Posterior vena cava (tissue), 2 donors: ENCODE measurements at regions of chr14 and their contacts with region 1.

Region 1: GRCh38 chr14:28083389-28083788 is 683.2 kb upstream of the FOXG1 start:
- DNase-seq: no peak

Region 2: DNA sequence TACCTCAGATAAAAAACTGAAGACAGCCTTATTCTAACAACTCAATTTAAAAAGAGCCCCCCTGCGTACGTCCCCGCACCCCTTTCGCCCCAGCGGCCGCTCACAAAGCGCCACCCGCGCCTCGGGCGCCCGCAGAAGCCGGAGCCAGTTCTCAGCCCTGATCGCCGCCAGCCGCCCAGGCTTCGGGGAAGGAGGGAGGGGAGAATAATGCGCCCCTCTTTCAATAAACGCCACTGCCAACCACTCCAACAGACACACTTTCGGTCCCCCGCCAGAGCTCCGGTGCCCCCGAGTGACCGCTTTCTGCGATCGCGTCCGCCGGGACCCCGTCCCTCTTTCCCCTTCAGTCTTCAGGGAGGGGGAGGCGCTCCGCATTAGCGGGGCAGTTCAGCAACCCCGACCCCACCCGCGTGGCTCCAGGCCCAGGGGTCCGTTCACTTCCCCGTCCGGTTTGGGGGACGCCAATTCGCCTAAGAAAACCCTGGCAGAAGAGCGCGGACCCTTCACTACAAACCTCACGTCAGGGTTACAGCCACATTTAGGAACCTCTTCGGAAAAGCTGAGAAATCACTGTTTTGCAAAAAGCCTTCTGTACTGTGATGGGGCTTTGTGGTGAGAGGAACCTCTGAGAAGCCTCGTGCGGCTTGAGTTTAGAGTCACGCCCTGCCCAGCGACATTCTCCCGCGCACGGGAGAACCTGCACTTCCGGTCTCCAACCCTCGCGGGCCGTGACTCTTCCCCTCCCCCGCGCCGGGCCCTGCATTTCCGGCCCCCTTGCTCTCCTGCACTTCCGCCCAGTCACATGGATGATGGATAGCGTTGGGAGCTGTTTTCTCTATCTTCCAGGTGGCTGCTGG is 701.9 kb after region 1 on chr14:
- intact Hi-C with region 1: loop called in 1 of 2 experiments (anchors 5 kb)
- DNase-seq: no peak